Activated CD4-positive, alpha-beta memory T cell treated with anti-CD3 and anti-CD28 coated beads for 36 hours (primary cell): ENCODE measurements at regions of chr16 and their contacts with region 1.

Region 1: GRCh38 chr16:12803203-12804097 is at the start of gene CPPED1:
- DNase-seq: peak; percentile 94
- H3K4me3 Mint-ChIP-seq: peak within 1 kb of the TSS; percentile 95
- H3K27ac Mint-ChIP-seq: peak within 1 kb of the TSS; percentile 91
- H3K4me1 Mint-ChIP-seq: peaks cover 30% of the 10 kb centered on the region
- H3K27me3 Mint-ChIP-seq: peaks cover 2% of the 10 kb centered on the region
- total RNA-seq, gene CPPED1: 11.0 to 11.5 TPM

Region 2: GRCh38 chr16:12079412-12079965 is 724.0 kb before region 1 on chr16:
- CTCF ChIA-PET with region 1: no interaction called
- POLR2A ChIA-PET with region 1: no interaction called
- intact Hi-C with region 1: loop called (anchors 2 kb)
- DNase-seq: no peak
- H3K4me3 Mint-ChIP-seq: peak overlapping the region; percentile 32
- H3K27ac Mint-ChIP-seq: peak overlapping the region; percentile 94
- H3K4me1 Mint-ChIP-seq: peaks cover 65% of the 10 kb centered on the region
- H3K27me3 Mint-ChIP-seq: no peaks in the 10 kb centered on the region

Region 3: GRCh38 chr16:12455287-12455798 is 348.1 kb before region 1 on chr16:
- CTCF ChIA-PET with region 1: interaction called, 3 read pairs
- POLR2A ChIA-PET with region 1: no interaction called
- intact Hi-C with region 1: loop called (anchors 5 kb)
- DNase-seq: peak; percentile 67
- H3K4me3 Mint-ChIP-seq: no peak overlapping the region
- H3K27ac Mint-ChIP-seq: no peak overlapping the region
- H3K4me1 Mint-ChIP-seq: peaks cover 16% of the 10 kb centered on the region
- H3K27me3 Mint-ChIP-seq: no peaks in the 10 kb centered on the region

Region 4: DNA sequence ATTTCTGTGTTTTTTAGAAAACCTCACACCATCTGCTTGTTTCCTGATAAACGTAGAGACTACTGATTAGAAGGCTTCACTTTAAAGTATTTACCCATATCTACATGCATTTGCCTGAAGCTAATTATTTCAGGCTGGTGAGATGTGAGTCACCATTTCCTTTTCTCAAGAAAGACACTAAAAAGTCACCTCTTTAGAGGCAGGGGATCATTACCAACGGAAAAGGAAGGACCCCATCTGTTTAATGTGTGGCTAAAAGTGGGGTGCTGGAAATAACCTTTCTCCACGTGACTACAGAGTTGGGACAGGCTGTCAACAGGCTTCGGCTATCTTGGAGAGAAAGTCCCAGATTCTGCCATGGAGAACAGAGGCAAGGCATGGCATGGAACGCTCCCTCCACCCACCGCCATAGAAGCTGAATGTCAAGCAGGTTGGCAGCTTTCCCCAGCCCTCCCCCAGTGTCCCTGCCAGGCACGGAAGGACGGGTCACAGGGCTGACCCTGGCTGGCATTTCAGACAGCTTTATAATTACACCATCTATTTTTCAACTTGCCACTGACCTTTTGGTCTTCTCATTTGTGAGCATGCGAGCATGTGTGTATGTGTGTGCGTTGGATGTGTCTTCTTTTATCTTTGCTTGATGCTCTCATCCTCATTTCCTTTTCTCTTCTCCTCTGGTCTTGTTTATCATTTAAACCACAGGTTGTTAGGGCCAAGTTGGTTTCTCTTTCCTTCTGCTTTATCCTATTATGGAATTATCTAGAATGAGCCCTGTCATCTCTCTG is 156.8 kb before region 1 on chr16:
- CTCF ChIA-PET with region 1: no interaction called
- POLR2A ChIA-PET with region 1: no interaction called
- intact Hi-C with region 1: loop called (anchors 5 kb)
- DNase-seq: peak; percentile 44
- H3K4me3 Mint-ChIP-seq: peak overlapping the region; percentile 42
- H3K27ac Mint-ChIP-seq: peak overlapping the region; percentile 75
- H3K4me1 Mint-ChIP-seq: peaks cover 16% of the 10 kb centered on the region
- H3K27me3 Mint-ChIP-seq: peaks cover 1% of the 10 kb centered on the region

Region 5: DNA sequence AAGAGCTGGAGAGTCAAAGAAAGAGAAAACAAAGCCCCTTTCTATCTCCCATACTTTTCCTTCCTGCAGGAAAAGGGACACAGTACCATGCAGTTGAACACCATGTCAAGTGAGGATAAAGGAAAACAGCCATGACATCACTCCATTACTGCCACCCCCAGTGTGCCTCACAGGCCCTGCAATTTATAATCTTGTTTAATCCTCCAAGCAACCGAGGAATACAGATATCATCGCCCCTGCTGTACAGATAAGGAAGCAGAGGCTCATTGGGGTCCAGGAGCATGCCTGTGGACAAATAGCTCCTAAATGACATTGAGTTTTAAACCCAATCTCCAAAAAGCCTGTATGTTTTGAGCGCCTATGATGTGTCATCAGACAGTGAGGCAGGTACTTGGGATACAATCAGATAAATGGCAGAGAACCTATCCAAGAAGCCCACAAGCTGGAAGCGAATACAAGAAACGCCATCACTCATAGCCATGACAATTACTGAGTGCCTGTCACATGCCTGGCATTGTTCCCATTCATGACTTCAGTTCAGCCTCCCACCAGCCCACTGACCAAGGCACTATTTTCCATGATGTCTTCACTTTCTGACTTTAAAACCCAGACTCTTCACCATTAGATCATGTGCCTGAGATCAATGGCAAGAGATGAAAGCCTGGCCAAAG is 45.3 kb before region 1 on chr16:
- CTCF ChIA-PET with region 1: no interaction called
- POLR2A ChIA-PET with region 1: no interaction called
- intact Hi-C with region 1: no loop called
- DNase-seq: no peak
- H3K4me3 Mint-ChIP-seq: no peak overlapping the region
- H3K27ac Mint-ChIP-seq: no peak overlapping the region
- H3K4me1 Mint-ChIP-seq: peaks cover 7% of the 10 kb centered on the region
- H3K27me3 Mint-ChIP-seq: no peaks in the 10 kb centered on the region

Region 6: DNA sequence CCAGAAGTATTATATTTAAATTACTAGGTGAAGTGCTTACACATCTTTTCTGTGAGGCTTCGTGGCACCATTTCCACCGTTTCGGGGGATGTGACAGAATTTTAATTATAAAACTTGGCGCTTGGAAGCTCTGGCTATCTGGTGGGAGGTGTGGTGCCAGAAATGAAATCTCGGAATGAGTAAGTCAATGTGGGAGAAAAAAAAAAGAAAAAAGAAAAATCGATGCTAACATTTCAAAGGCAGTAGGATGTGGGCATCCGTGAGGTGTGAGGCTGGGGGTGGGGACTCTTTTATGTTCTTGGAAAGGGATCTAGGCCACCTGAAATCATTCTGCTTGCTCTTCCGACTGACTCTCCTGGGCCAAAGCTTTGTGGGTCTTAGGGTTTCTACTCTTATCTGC is 21.7 kb before region 1 on chr16:
- CTCF ChIA-PET with region 1: interaction called, 4 read pairs
- POLR2A ChIA-PET with region 1: interaction called, 6 read pairs
- intact Hi-C with region 1: loop called (anchors 1 kb)
- DNase-seq: peak; percentile 73
- H3K4me3 Mint-ChIP-seq: no peak overlapping the region
- H3K27ac Mint-ChIP-seq: peak overlapping the region; percentile 64
- H3K4me1 Mint-ChIP-seq: peaks cover 9% of the 10 kb centered on the region
- H3K27me3 Mint-ChIP-seq: no peaks in the 10 kb centered on the region